ENCODE measurements at regions of chr12 and their contacts with region 1.

Region 1: GRCh38 chr12:72017054-72017651 is 78.5 kb downstream of the TPH2 start:
- DNase-seq: peak; percentile 54
- H3K4me3 ChIP-seq: no peak overlapping the region
- H3K27ac ChIP-seq: no peak overlapping the region
- H3K4me1 ChIP-seq: 0 out of 4 replicates have a peak, but pooled peaks cover 0 to 4% of the 10 kb centered on the region in 2 experiments
- H3K27me3 ChIP-seq: no peaks in the 10 kb centered on the region; the same call in 1 of the 2 replicates
- CTCF ChIP-seq: peak; percentile 75
- EP300 ChIP-seq: no peak
- RAD21 ChIP-seq: peak; percentile 89

Region 2: GRCh38 chr12:72006766-72007165 is 10.4 kb before region 1 on chr12:
- CTCF ChIA-PET with region 1: interaction called, 28 read pairs
- POLR2A ChIA-PET with region 1: no interaction called
- DNase-seq: no peak
- H3K4me3 ChIP-seq: no peak overlapping the region
- H3K27ac ChIP-seq: no peak overlapping the region
- H3K4me1 ChIP-seq: peaks cover 0 to 6% of the 10 kb centered on the region in 2 experiments; a peak in 1 of 4 replicates
- H3K27me3 ChIP-seq: no peaks in the 10 kb centered on the region
- CTCF ChIP-seq: no peak
- EP300 ChIP-seq: no peak
- RAD21 ChIP-seq: no peak

Region 3: DNA sequence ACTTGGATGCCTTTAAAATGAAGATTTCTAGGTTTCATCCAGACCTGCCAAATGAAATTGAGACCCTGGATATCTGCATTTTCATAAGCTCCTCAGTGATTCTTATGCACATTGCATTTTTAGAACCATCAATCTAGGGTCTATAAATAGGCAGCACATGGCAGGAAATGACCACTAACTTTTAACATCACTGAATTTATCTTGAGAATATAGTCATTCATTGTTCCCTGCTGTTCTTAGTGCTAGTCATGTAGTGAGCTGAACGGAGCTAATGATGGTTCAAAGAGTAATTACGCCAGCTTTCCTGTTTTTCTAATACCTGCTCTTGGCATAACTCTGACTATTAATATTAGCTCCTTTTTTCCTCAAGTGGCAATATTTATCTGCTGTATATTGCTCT is 13.1 kb after region 1 on chr12:
- CTCF ChIA-PET with region 1: interaction called, 19 read pairs
- POLR2A ChIA-PET with region 1: no interaction called
- DNase-seq: no peak
- H3K4me3 ChIP-seq: no peak overlapping the region
- H3K27ac ChIP-seq: no peak overlapping the region
- H3K4me1 ChIP-seq: no peaks in the 10 kb centered on the region
- H3K27me3 ChIP-seq: no peaks in the 10 kb centered on the region
- CTCF ChIP-seq: no peak
- EP300 ChIP-seq: no peak
- RAD21 ChIP-seq: no peak

Region 4: DNA sequence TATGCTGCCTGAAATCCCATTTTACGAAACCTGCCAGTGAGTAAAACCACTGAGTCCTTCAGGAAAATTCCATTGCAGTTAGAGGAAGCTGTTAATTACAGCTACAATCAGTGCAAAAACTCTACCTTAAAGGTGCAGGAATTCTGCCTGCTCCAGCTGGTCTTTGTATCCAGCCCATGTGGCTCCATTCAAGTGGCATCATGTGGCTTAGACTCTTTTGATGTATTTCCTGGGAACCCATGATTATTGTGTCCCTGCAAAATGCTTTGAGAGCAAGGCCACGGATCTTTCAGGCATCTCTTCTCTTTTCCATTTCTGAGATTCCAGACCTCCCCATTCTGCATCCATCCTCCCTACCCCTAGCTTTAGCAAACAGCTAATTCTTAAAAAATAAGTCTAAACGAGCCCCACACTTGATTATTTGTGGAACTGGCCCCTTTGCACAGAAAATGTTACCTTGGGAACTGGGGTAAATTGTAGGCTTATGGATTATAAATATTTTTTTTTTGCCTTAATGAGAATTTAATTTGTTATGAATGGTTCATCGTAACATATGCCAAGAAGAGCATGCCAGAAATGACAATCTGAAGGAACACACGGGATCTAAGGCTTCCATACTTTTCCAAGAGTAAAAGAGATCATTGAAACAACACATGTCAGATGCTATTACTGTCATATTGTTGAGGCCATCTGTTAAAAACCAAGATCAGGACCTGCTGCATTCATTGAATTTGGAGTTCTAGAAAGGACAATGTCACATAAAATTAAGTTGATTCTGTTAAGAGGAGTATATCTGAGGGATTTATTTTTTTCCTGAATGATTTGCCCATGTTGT is 66.0 kb after region 1 on chr12:
- CTCF ChIA-PET with region 1: no interaction called
- POLR2A ChIA-PET with region 1: no interaction called
- DNase-seq: no peak
- H3K4me3 ChIP-seq: no peak overlapping the region
- H3K27ac ChIP-seq: no peak overlapping the region
- H3K4me1 ChIP-seq: no peaks in the 10 kb centered on the region; a peak in 1 of 4 replicates
- H3K27me3 ChIP-seq: no peaks in the 10 kb centered on the region
- CTCF ChIP-seq: no peak
- EP300 ChIP-seq: no peak
- RAD21 ChIP-seq: no peak

Region 5: GRCh38 chr12:72346363-72346944 is 329.3 kb after region 1 on chr12:
- CTCF ChIA-PET with region 1: interaction called, 11 read pairs
- POLR2A ChIA-PET with region 1: no interaction called
- DNase-seq: peak; percentile 29
- H3K4me3 ChIP-seq: no peak overlapping the region; a peak in 1 of 4 replicates
- H3K27ac ChIP-seq: no peak overlapping the region
- H3K4me1 ChIP-seq: peaks cover 0 to 13% of the 10 kb centered on the region in 2 experiments; a peak in 1 of 4 replicates
- H3K27me3 ChIP-seq: no peaks in the 10 kb centered on the region
- CTCF ChIP-seq: peak; percentile 75
- EP300 ChIP-seq: no peak
- RAD21 ChIP-seq: peak; percentile 84